ENCODE measurements at regions of chr5 and their contacts with region 1.

Region 1: GRCh38 chr5:151164686-151165392 is 7.3 kb upstream of the ANXA6 start:
- DNase-seq: peak; percentile 89

Region 2: DNA sequence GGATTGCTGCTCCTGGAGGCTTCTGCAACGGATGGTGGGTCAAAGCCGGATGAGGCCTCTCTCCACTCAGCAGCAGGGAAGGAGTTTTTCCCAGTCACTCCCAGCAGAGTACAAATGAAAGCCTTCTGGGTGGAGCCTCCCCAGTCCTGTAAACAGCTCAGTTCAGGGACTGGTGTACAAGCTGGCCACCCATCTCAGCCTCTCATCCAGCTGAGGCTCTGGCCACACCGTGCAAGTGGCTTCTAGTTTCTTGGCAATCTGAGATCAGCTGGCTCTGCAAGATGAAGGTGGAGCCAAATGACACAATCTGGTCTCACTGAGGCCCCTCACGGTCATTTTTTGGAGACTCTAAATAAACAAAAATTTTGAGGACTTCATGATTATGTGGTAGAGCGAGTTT is 134.4 kb before region 1 on chr5:
- intact Hi-C with region 1: no loop called
- DNase-seq: peak; percentile 91

Region 3: DNA sequence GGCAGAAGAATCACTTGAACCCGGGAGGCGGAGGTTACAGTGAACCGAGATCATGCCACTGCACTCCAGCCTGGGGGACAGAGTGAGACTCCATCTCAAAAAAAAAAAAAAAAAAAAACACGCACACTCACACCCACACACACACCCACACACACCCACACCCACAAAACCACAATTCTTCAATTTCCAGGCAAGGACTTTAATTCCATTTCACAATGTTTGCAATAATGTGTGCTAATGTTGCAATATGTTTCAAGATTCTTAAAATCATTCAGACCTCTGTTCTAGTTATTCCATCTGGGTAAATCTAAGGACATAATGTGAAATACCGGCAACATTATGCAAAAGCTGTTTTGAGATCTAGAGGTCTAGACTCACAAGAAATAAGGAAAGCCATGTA is 30.8 kb after region 1 on chr5:
- intact Hi-C with region 1: loop called in 1 of 2 experiments (anchors 1 kb)
- DNase-seq: no peak